Naive thymus-derived CD4-positive, alpha-beta T cell (primary cell): ENCODE measurements at regions of chrX and their contacts with region 1.

Region 1: GRCh38 chrX:54891573-54891972 is 29.1 kb upstream of the TRO start:
- DNase-seq: peak in 7 of 9 donors; percentile 11 to 54 (median 40)
- ATAC-seq: peak; percentile 60
- H3K4me3 ChIP-seq: no peak overlapping the region
- H3K4me3 Mint-ChIP-seq: no peak overlapping the region
- H3K27ac ChIP-seq: no peak overlapping the region
- H3K27ac Mint-ChIP-seq: no peak overlapping the region
- H3K4me1 ChIP-seq: no peaks in the 10 kb centered on the region
- H3K4me1 Mint-ChIP-seq: peaks cover 0 to 1% (median 0%) of the 10 kb centered on the region in 7 donors
- H3K27me3 ChIP-seq: no peaks in the 10 kb centered on the region
- H3K27me3 Mint-ChIP-seq: peaks cover 0 to 9% (median 4%) of the 10 kb centered on the region in 5 donors

Region 2: DNA sequence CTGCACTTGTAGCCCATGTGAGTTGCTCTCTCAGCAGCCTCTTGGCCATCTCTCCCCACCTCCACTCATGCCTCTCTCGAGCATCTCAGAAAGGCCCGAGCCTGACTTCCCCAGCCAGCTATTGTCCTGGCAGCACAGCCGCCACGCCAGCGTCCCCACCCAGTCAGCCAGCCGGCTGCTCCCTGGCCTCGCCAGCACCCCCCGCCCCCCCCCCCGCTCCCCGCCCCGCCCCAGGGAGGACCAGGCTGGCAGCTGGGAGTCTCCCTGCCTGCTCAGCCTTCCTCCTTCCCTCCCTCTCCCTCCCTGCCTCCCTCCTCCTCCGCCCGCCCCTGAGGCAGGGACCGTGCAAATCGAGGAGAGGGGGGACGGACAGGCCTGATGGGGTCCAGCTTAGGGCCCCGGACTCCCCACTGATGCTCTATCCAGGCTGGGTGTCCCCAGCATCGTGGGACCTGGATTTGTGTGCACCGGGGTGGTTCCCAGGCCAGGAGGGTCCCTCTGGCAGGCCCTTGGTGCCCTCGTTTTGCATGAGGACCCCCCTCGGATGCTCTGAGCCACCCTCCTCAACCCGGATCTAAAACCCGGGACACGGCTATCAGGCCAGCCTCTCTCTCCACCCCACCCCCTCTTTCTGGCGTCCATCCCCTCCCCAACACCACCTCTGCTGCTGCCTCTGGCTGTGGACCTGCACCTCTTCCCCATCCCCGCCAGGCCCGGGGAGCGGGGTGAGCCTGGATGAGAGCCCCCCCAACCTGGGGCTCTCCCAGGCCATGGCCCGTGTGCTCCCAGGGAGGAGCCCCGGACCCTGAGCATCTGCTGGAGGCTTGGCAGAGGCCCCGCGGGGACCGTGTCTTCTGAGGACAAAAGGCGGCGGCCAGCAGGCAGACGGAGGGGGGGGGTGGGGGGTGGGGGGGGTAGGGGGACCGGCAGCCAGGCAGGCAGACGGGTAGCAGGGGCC is 1843.1 kb before region 1 on chrX and contains the start of gene GPR173:
- CTCF ChIA-PET with region 1: no interaction called
- POLR2A ChIA-PET with region 1: no interaction called
- intact Hi-C with region 1: no loop called
- DNase-seq: no peak
- ATAC-seq: no peak
- H3K4me3 ChIP-seq: no peak within 1 kb of the TSS
- H3K4me3 Mint-ChIP-seq: peak within 1 kb of the TSS in 3 of 10 donors; percentile 5 to 33 (median 30)
- H3K27ac ChIP-seq: no peak within 1 kb of the TSS
- H3K27ac Mint-ChIP-seq: no peak within 1 kb of the TSS
- H3K4me1 ChIP-seq: no peaks in the 10 kb centered on the region
- H3K4me1 Mint-ChIP-seq: peaks cover 0 to 4% (median 0%) of the 10 kb centered on the region in 7 donors
- H3K27me3 ChIP-seq: no peaks in the 10 kb centered on the region
- H3K27me3 Mint-ChIP-seq: peaks cover 0 to 8% (median 0%) of the 10 kb centered on the region in 5 donors
- total RNA-seq, gene GPR173: 0.13 to 0.47 TPM in 2 of 5 experiments, not detected in the others

Region 3: GRCh38 chrX:54540289-54540688 is 351.3 kb before region 1 on chrX:
- CTCF ChIA-PET with region 1: no interaction called
- POLR2A ChIA-PET with region 1: no interaction called
- intact Hi-C with region 1: no loop called
- DNase-seq: no peak
- ATAC-seq: no peak
- H3K4me3 ChIP-seq: no peak overlapping the region
- H3K4me3 Mint-ChIP-seq: no peak overlapping the region
- H3K27ac ChIP-seq: no peak overlapping the region
- H3K27ac Mint-ChIP-seq: no peak overlapping the region
- H3K4me1 ChIP-seq: no peaks in the 10 kb centered on the region
- H3K4me1 Mint-ChIP-seq: peaks cover 0 to 13% (median 7%) of the 10 kb centered on the region in 7 donors
- H3K27me3 ChIP-seq: no peaks in the 10 kb centered on the region
- H3K27me3 Mint-ChIP-seq: no peaks in the 10 kb centered on the region

Region 4: DNA sequence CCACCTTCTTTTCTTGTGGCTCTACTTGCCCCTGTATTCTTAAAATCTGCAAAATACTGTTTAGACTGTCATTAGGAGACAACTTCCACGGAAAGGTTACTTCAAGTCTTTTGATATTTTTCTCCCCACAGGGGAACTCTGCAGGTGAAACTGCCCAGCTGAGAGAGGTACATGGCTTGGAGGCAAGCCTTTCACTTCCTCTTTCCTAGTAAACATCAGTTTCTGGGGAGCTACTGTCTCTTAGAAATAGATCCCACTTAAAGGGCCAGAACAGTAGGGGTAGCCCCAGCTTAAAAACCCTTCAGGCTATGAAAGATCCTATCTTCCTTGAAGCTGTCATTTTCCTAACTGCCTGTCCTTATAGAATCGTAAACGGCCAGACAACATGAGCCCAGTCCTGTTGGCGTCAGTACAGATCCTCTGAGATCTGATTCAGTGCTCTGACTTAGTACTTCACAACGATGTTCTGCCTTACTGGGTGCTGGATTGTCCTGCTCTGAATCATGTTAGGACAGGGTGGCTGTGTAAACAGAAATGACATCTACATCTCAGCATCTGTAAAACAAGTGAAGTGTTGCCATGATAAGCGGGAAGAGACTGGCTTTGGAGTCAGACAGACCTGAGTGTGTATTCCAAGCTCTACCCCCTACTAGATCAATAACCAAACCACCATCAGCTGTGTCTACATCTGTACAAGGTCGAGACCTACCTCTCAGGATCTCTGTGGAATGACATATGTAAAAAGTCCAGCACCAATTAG is 195.6 kb before region 1 on chrX:
- CTCF ChIA-PET with region 1: no interaction called
- POLR2A ChIA-PET with region 1: no interaction called
- intact Hi-C with region 1: no loop called
- DNase-seq: no peak
- ATAC-seq: no peak
- H3K4me3 ChIP-seq: no peak overlapping the region
- H3K4me3 Mint-ChIP-seq: no peak overlapping the region
- H3K27ac ChIP-seq: no peak overlapping the region
- H3K27ac Mint-ChIP-seq: no peak overlapping the region
- H3K4me1 ChIP-seq: no peaks in the 10 kb centered on the region
- H3K4me1 Mint-ChIP-seq: no peaks in the 10 kb centered on the region
- H3K27me3 ChIP-seq: no peaks in the 10 kb centered on the region
- H3K27me3 Mint-ChIP-seq: peaks cover 0 to 5% (median 3%) of the 10 kb centered on the region in 5 donors

Region 5: GRCh38 chrX:55011294-55011693 is 119.7 kb after region 1 on chrX:
- CTCF ChIA-PET with region 1: no interaction called
- POLR2A ChIA-PET with region 1: no interaction called
- intact Hi-C with region 1: loop called in 1 of 2 experiments (anchors 1 kb)
- DNase-seq: peak in 2 of 9 donors; percentile 2 to 15
- ATAC-seq: no peak
- H3K4me3 ChIP-seq: no peak overlapping the region
- H3K4me3 Mint-ChIP-seq: no peak overlapping the region
- H3K27ac ChIP-seq: no peak overlapping the region
- H3K27ac Mint-ChIP-seq: no peak overlapping the region
- H3K4me1 ChIP-seq: peaks cover 0 to 8% of the 10 kb centered on the region in 2 donors
- H3K4me1 Mint-ChIP-seq: peaks cover 0 to 9% (median 6%) of the 10 kb centered on the region in 7 donors
- H3K27me3 ChIP-seq: no peaks in the 10 kb centered on the region
- H3K27me3 Mint-ChIP-seq: no peaks in the 10 kb centered on the region

Region 6: GRCh38 chrX:55098691-55099090 is 207.1 kb after region 1 on chrX:
- CTCF ChIA-PET with region 1: no interaction called
- POLR2A ChIA-PET with region 1: no interaction called
- intact Hi-C with region 1: no loop called
- DNase-seq: no peak
- ATAC-seq: no peak
- H3K4me3 ChIP-seq: no peak overlapping the region
- H3K4me3 Mint-ChIP-seq: no peak overlapping the region
- H3K27ac ChIP-seq: no peak overlapping the region
- H3K27ac Mint-ChIP-seq: no peak overlapping the region
- H3K4me1 ChIP-seq: no peaks in the 10 kb centered on the region
- H3K4me1 Mint-ChIP-seq: peaks cover 0 to 5% (median 0%) of the 10 kb centered on the region in 7 donors
- H3K27me3 ChIP-seq: no peaks in the 10 kb centered on the region
- H3K27me3 Mint-ChIP-seq: no peaks in the 10 kb centered on the region